ENCODE measurements at regions of chr11 and their contacts with region 1.

Region 1: DNA sequence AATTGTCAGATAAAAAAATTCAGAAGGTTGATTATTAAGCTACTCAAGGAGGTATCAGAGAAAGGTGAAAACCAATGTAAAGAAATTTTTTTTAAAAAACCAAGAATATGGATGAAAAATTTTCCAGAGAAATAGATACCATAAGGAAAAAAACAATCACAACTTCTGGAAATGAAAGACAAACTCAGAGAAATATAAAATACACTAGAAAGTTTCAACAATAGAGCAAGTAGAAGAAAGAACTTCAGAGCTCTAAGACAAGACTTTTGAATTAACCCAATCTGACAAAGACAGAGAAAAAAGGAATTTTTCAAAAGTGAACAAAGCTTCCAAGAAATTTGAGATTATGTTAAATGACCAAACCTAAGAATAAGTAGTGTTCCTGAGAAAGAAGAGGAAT is 62.9 kb upstream of the TEAD1 start:
- DNase-seq: no peak
- H3K4me3 ChIP-seq: no peak overlapping the region
- H3K27ac ChIP-seq: no peak overlapping the region
- H3K4me1 ChIP-seq: no peaks in the 10 kb centered on the region
- H3K27me3 ChIP-seq: peaks cover 0 to 3% (median 0%) of the 10 kb centered on the region in 5 experiments

Region 2: GRCh38 chr11:12599408-12600143 is 11.8 kb before region 1 on chr11:
- CTCF ChIA-PET with region 1: interaction called, 14 read pairs
- POLR2A ChIA-PET with region 1: no interaction called
- DNase-seq: peak; percentile 17 to 34 (median 24)
- H3K4me3 ChIP-seq: no peak overlapping the region
- H3K27ac ChIP-seq: no peak overlapping the region
- H3K4me1 ChIP-seq: no peaks in the 10 kb centered on the region
- H3K27me3 ChIP-seq: peaks cover 3 to 21% (median 11%) of the 10 kb centered on the region in 5 experiments